ENCODE measurements at regions of chr17 and their contacts with region 1.

Region 1: DNA sequence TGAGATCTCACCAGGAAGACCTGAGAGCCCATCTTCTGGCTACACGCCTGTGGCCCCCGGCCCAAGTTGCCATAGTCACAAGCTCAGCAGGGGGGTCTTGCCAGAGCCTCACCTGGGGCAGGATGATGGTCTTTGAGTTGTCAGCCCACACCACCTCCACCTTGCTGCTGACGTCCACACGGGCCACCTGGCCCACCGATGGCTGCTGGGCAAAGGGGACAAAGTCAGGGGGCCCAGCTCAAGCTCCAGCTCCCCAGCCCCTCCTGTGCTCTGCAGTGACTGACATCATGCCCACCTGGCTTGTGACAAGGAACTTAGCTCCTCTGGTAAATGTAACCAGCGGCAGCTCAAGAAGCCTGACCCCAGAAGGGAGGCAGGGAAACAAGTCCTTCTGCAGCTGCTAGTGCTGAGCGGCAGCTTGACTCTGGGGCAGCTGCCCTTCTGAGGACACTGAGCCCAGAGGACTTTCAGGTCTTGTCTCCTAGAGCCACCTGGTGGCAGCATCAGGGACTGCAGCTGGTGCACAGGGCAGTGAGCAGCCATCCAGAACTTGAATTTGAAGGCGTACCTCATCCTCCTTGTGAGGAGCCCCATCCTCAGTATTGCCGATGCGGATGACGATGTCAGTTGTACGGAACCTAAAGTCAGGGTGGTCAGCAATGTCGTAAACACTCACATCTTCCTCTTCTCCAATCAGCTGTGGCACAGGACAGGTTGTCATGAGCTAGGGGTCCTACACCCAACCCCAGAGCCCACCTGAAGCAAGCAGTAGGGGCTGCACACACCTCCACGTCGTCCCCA is 13.5 kb downstream of the SPHK1 start:
- DNase-seq: peak; percentile 89 to 93 (median 90)
- ATAC-seq: peak; percentile 81
- H3K4me3 ChIP-seq: no peak overlapping the region
- H3K27ac ChIP-seq: no peak overlapping the region
- H3K4me1 ChIP-seq: no peaks in the 10 kb centered on the region
- H3K27me3 ChIP-seq: no peaks in the 10 kb centered on the region
- CTCF ChIP-seq: peak; percentile 89 to 98 (median 94)
- POLR2A ChIP-seq: no peak

Region 2: GRCh38 chr17:76307299-76307965 is 90.5 kb before region 1 on chr17:
- intact Hi-C with region 1: loop called (anchors 2 kb)
- DNase-seq: no peak
- ATAC-seq: peak; percentile 23
- H3K4me3 ChIP-seq: no peak overlapping the region
- H3K27ac ChIP-seq: no peak overlapping the region
- H3K4me1 ChIP-seq: no peaks in the 10 kb centered on the region
- H3K27me3 ChIP-seq: no peaks in the 10 kb centered on the region
- CTCF ChIP-seq: no peak
- POLR2A ChIP-seq: no peak

Measured in body of pancreas (tissue), 4 donors.